ENCODE measurements at regions of chr5 and their contacts with region 1.

Region 1: DNA sequence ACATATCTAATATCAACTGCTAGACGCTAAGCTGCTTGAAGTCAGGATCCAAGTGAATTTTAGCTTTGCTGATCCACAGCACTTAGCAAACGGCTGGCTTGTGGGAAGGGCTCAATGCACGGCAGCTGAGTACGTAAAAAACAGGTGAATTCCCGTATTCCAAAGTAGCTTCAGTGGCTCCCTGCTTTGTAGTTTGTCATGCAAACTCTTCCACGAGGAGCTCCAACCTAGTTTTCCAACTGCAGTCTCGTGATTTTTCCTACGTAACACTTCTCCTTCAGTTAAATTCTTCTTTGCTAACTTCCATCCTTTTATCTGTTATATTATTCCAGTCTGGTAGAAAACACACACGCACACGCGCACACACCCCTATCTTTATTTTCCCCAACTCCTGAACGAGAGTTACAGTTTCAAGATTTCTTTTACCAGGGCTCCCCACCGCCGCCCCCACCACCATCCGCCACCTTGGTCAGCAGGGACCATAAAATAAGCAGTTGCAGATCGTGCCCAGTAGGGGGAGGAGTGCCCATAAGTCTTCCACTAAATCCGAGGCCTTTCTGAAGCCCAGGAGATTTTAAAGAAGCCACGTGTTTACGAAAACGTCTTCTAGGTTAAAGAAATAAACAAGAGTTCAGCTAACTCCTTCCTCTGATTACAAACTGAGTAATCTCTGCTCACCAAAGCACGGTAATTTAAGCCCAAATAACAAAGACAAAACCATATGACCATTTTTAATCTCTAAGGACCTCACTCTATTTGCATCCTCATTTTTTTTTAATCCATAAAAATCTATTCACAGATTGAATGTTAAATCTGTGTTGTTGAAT is 34.8 kb upstream of the TRIO start:
- DNase-seq: peak in 4 of 5 donors; percentile 51 to 66 (median 58)
- ATAC-seq: peak; percentile 75 to 84 (median 80)
- H3K4me3 ChIP-seq: peak overlapping the region in 9 of 12 donors; percentile 19 to 43 (median 30)
- H3K27ac ChIP-seq: no peak overlapping the region
- H3K4me1 ChIP-seq: peaks cover 0 to 21% (median 5%) of the 10 kb centered on the region in 12 donors
- H3K27me3 ChIP-seq: no peaks in the 10 kb centered on the region
- CTCF ChIP-seq: peak; percentile 55 to 84 (median 78)
- POLR2A ChIP-seq: no peak

Region 2: DNA sequence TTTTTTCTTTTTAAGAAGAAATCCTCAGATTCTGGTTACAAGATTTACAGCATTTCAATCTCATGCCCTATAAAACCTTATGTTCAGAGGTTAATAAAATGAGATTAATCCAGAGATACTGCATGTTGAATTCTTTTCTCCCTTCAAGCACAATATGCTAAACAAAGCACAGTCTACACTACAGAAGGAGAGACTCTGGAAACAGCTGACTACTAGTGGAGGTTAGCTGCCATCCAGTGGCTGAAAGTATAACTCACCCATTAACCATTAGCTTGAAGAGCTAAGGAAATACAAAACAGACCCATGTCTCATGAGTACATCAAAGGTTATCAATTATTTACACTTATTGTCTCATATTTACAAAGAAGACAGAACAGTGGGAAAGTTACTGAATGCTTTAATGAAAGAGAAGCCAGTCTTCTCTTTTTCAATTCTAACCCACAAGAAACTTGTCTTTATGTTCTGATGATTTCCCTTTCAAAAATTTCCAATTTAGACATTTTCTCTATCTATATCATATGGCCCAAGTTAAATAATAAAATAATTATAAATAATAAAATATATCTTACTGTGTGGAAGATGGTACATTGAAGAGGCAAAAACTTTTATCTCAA is 151.2 kb before region 1 on chr5:
- intact Hi-C with region 1: no loop called
- DNase-seq: no peak
- ATAC-seq: peak in 3 of 4 donors; percentile 60 to 81 (median 80)
- H3K4me3 ChIP-seq: no peak overlapping the region
- H3K27ac ChIP-seq: no peak overlapping the region
- H3K4me1 ChIP-seq: no peaks in the 10 kb centered on the region
- H3K27me3 ChIP-seq: peaks cover 0 to 3% (median 0%) of the 10 kb centered on the region in 9 donors
- CTCF ChIP-seq: peak; percentile 26 to 64 (median 46)
- POLR2A ChIP-seq: no peak

Region 3: GRCh38 chr5:13987843-13988464 is 120.4 kb before region 1 on chr5:
- intact Hi-C with region 1: loop called in 6 of 10 experiments (anchors 5 to 10 kb)
- DNase-seq: peak in 2 of 5 donors; percentile 24 to 44
- ATAC-seq: peak in 3 of 4 donors; percentile 54 to 80 (median 67)
- H3K4me3 ChIP-seq: no peak overlapping the region
- H3K27ac ChIP-seq: no peak overlapping the region
- H3K4me1 ChIP-seq: peaks cover 0 to 6% (median 0%) of the 10 kb centered on the region in 12 donors
- H3K27me3 ChIP-seq: peaks cover 0 to 7% (median 0%) of the 10 kb centered on the region in 9 donors
- CTCF ChIP-seq: peak; percentile 62 to 93 (median 86)
- POLR2A ChIP-seq: no peak

Region 4: DNA sequence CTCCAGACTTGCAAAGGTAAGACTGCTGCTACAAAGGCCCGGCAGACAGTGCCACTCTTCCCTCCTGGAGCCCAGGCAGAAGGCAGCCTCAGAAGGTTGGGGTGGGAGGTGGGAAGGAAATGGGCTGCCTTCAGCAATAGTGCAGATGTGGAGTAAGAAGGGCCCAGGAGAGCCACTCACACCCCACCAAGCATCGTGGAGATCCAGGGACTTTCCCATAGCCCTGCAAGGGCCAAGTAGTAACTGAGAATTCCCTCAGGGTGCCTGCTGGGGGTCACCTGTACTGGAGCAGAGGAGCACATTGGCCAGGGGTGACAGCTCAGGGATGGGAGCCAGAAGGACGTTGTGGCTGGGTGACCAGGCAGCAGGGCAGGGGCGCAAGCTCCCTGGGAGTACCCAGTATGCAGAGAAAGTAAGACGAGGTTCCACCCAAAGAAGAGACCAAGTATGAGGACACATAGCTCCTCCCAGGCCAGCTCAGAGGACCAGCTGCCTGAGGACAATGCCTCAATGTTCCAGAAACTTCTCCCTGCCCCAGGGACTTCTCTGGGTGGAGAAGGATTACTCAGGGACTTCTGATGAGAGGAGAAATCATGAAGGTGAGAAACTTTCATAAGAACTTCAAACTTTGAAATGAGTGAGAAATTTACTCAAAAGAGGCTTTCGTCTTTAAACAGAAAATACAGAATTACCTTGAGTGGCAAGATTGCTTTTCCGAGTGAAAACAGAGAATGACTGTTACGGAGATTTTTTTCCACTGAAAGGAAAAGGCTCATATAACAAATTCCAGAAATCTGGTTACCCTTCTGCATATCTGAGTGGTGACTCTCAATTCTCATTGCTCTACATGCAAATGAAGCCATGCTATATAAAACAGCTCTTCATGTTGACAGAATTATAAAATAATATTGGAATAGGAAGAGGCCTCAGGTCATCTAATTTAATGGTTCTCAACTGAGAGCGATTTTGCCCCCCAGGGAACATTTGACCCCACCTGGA is 53.1 kb before region 1 on chr5:
- intact Hi-C with region 1: no loop called
- DNase-seq: no peak
- ATAC-seq: peak in 3 of 4 donors; percentile 28 to 58 (median 42)
- H3K4me3 ChIP-seq: no peak overlapping the region
- H3K27ac ChIP-seq: no peak overlapping the region
- H3K4me1 ChIP-seq: no peaks in the 10 kb centered on the region
- H3K27me3 ChIP-seq: no peaks in the 10 kb centered on the region
- CTCF ChIP-seq: no peak
- POLR2A ChIP-seq: no peak

Region 5: GRCh38 chr5:14142827-14143548 is 34.6 kb after region 1 on chr5 and contains the start of gene TRIO:
- intact Hi-C with region 1: loop called in 5 of 10 experiments (anchors 2 to 5 kb)
- DNase-seq: peak; percentile 90 to 95 (median 94)
- ATAC-seq: peak; percentile 77 to 88 (median 84)
- H3K4me3 ChIP-seq: peak within 1 kb of the TSS; percentile 84 to 97 (median 90)
- H3K27ac ChIP-seq: peak within 1 kb of the TSS; percentile 82 to 97 (median 95)
- H3K4me1 ChIP-seq: peaks cover 6 to 44% (median 32%) of the 10 kb centered on the region in 12 donors
- H3K27me3 ChIP-seq: no peaks in the 10 kb centered on the region
- CTCF ChIP-seq: peak; percentile 28 to 87 (median 56)
- POLR2A ChIP-seq: peak in 1 of 2 donors; percentile 41
- total RNA-seq, gene TRIO: 45.4 to 99.1 (median 63.2) TPM

Region 6: GRCh38 chr5:14270209-14270702 is 161.9 kb after region 1 on chr5:
- intact Hi-C with region 1: loop called (anchors 1 to 5 kb)
- DNase-seq: peak in 4 of 5 donors; percentile 71 to 80 (median 74)
- ATAC-seq: peak; percentile 91 to 97 (median 93)
- H3K4me3 ChIP-seq: no peak overlapping the region
- H3K27ac ChIP-seq: peak overlapping the region in 11 of 12 donors; percentile 54 to 86 (median 74)
- H3K4me1 ChIP-seq: peaks cover 15 to 65% (median 43%) of the 10 kb centered on the region in 12 donors
- H3K27me3 ChIP-seq: no peaks in the 10 kb centered on the region
- CTCF ChIP-seq: peak; percentile 67 to 93 (median 86)
- POLR2A ChIP-seq: no peak

Region 7: GRCh38 chr5:14351845-14352712 is 243.7 kb after region 1 on chr5:
- intact Hi-C with region 1: loop called in 2 of 10 experiments (anchors 5 to 10 kb)
- DNase-seq: peak; percentile 57 to 73 (median 63)
- ATAC-seq: peak; percentile 64 to 89 (median 86)
- H3K4me3 ChIP-seq: no peak overlapping the region
- H3K27ac ChIP-seq: no peak overlapping the region
- H3K4me1 ChIP-seq: peaks cover 0 to 43% (median 12%) of the 10 kb centered on the region in 12 donors
- H3K27me3 ChIP-seq: no peaks in the 10 kb centered on the region
- CTCF ChIP-seq: peak; percentile 92 to 99 (median 96)
- POLR2A ChIP-seq: no peak

Measured in heart left ventricle (tissue), 16 donors.